Prostate gland (tissue), 2 donors: ENCODE measurements at regions of chr6 and their contacts with region 1.

Region 1: DNA sequence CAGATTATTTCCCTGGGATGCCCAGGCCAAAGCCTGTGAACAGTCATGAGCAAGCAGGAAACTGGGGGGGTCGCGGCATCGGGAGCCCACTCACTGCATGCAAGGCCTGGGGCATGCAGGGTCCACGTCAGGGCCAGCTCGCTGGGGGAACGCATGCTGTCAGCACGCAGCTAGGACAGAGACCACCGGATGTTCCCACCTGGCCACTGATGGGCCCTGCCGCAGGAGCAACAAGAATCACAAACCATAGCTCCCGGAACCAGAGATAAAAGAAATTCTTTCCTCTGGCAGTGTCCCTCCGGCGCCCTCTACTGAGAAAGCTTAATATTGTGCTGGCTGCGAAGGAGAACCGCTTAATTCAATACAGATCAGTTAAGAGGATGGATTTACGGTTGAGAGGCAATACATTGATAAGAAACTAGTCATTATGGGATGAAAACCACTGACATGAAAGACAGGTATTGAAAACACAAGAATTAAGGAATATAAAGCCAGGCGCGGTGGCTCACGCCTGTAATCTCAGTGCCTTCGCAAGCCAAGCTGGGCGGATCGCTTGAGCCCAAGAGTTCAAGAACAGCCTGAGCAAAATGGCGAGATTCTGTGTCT is 32.6 kb downstream of the C6orf15 start:
- DNase-seq: peak; percentile 59
- H3K4me3 ChIP-seq: no peak overlapping the region
- H3K27ac ChIP-seq: no peak overlapping the region
- H3K4me1 ChIP-seq: no peaks in the 10 kb centered on the region
- H3K27me3 ChIP-seq: no peaks in the 10 kb centered on the region
- CTCF ChIP-seq: peak in 2 of 4 experiments; percentile 66 to 79
- POLR2A ChIP-seq: no peak

Region 2: DNA sequence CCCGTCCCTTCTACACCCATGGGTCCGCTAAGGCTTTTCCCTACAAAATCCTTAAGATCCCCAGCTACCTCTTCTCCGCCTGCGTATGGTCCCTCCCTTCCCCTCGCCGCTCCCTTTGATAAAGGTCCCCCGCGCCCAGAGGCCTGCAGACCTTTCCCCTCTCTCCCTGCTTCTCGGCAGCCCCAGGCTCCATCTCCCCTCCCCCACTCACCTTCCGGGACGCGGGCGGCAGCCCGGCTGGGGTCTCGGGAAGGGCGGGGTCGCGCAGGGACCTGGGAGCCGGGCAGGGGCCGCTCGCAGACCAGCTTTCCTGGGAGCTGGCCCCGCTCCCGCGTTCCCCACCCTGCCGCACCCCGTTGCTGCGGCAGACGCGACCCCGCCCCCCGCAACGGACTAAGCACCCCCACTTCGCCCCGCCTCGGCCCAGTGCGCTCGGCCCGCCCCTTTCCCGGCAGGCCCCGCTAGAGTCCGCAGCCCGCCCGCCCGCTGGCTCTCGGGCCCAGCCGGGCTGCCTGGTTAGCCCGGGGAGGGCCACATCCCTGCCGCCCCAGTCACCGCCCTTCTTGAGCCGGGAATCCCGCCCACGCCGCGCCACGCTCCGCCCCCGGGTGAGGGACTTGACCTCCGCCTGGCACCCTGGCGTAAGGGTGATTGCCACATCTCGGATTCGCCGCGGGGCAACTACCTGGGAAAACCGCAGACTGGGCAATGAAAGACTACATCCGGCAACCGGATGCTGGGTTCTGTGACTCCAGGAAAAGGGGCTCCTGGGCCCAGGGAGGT is 337.3 kb before region 1 on chr6 and contains the start of gene FLOT1:
- intact Hi-C with region 1: loop called (anchors 5 kb)
- DNase-seq: peak; percentile 98
- H3K4me3 ChIP-seq: peak within 1 kb of the TSS; percentile 76 to 79
- H3K27ac ChIP-seq: peak within 1 kb of the TSS; percentile 95
- H3K4me1 ChIP-seq: no peaks in the 10 kb centered on the region
- H3K27me3 ChIP-seq: no peaks in the 10 kb centered on the region
- CTCF ChIP-seq: peak in 1 of 4 experiments; percentile 10
- POLR2A ChIP-seq: peak; percentile 82
- total RNA-seq, gene FLOT1: 117 to 133 TPM

Region 3: GRCh38 chr6:30821862-30822782 is 257.6 kb before region 1 on chr6:
- intact Hi-C with region 1: loop called (anchors 5 kb)
- DNase-seq: no peak
- H3K4me3 ChIP-seq: no peak overlapping the region
- H3K27ac ChIP-seq: peak overlapping the region; percentile 15 to 20
- H3K4me1 ChIP-seq: no peaks in the 10 kb centered on the region
- H3K27me3 ChIP-seq: no peaks in the 10 kb centered on the region
- CTCF ChIP-seq: peak; percentile 17 to 67 (median 48)
- POLR2A ChIP-seq: no peak

Region 4: DNA sequence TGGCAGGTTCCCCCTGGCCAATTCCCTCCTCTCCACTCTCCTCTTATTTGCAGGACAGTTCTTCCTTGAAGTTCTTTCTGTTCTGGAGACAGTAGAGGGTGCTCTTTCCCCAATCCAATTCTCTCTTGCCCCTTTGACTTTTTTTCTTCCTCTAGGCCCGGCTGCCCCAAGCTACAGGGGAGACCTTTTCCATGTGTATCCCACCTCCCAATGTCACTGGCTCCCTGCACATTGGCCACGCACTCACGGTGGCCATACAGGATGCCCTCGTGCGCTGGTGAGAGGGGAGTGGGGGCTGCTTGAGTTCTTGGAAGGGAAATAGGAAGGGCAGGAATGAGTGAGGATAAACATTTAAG is 164.2 kb before region 1 on chr6:
- intact Hi-C with region 1: loop called (anchors 5 kb)
- DNase-seq: peak; percentile 26
- H3K4me3 ChIP-seq: no peak overlapping the region
- H3K27ac ChIP-seq: peak overlapping the region; percentile 91 to 92
- H3K4me1 ChIP-seq: peaks cover 11% of the 10 kb centered on the region
- H3K27me3 ChIP-seq: no peaks in the 10 kb centered on the region
- CTCF ChIP-seq: peak in 3 of 4 experiments; percentile 45 to 74 (median 61)
- POLR2A ChIP-seq: no peak

Region 5: GRCh38 chr6:30926644-30927043 is 153.1 kb before region 1 on chr6:
- intact Hi-C with region 1: no loop called
- DNase-seq: no peak
- H3K4me3 ChIP-seq: no peak overlapping the region
- H3K27ac ChIP-seq: no peak overlapping the region
- H3K4me1 ChIP-seq: no peaks in the 10 kb centered on the region
- H3K27me3 ChIP-seq: no peaks in the 10 kb centered on the region
- CTCF ChIP-seq: no peak
- POLR2A ChIP-seq: no peak

Region 6: GRCh38 chr6:31180502-31180901 is 100.7 kb after region 1 on chr6:
- intact Hi-C with region 1: no loop called
- DNase-seq: no peak
- H3K4me3 ChIP-seq: peak overlapping the region in 1 of 2 donors; percentile 22
- H3K27ac ChIP-seq: no peak overlapping the region
- H3K4me1 ChIP-seq: no peaks in the 10 kb centered on the region
- H3K27me3 ChIP-seq: no peaks in the 10 kb centered on the region
- CTCF ChIP-seq: no peak
- POLR2A ChIP-seq: no peak